Posterior vena cava (tissue), 2 donors: ENCODE measurements at regions of chr7 and their contacts with region 1.

Region 1: GRCh38 chr7:76185187-76185896 is 16.4 kb upstream of the SRRM3 start:
- DNase-seq: no peak

Region 2: DNA sequence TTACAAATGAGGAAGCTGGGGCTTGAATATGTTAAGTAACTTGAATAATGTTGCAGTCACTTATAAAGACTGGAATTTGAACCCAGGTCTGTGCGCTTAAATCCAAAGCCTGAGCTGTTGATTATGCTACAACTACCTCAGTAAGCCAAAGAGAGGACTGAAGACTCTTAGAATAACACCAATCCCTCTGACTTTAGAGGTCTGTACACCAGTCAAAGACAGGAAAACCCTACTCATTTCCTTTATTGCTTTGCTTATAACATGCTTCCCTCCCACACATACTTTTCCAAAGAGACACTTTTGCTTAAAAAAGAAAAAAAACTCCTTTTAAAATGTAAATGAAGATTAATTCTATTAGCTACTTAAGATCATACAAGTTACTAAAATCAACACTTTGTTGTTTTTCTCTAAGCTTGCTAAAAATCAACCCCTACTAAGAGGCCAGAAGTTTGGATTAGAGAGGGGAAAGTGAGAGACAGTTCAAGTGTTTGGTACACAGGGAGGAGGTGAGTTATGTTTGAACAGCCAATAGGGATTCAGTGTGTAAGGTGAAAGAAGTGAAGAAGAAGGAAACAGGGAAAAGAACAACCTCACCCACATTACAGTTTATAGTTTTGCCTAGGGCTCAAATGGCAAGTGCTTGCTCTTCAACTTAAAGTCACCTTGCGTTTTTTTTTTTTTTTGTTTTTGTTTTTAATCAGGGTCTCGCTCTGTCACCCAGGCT is 62.7 kb before region 1 on chr7:
- intact Hi-C with region 1: no loop called
- DNase-seq: no peak

Region 3: DNA sequence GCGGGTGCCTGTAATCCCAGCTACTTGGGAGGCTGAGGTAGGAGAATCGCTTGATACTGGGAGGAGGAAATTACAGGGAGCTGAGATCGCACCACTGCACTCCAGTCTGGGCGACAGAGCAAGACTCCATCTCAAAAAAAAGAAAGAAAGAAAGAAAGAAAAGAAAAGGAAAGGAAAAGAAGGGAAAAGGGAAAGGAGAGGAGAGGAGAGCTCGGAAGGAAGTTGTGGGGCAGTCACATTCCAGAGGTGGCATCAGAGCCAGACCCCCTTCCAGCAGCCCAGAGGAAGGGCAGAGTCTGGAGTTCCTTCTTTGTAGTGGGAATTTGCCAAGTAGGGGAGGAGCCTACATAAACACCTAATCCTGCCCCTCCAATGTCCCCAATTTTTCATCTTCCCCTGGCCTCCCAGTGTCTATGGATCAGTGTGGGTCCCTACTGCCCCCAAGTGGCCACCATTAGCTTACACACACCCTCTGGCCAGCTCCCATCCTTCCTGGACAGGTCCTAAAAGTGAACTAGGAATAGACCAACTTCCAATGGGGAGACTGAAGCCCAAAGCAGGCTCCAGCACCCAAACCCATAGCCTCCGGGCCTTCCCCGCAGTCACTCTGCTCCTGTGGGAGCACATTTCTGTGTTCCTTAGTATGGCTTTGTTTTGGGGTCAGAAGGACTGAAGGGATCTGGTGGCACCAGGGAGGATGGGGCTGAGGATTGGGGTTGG is 77.5 kb after region 1 on chr7:
- intact Hi-C with region 1: loop called in 1 of 2 experiments (anchors 10 kb)
- DNase-seq: no peak

Region 4: GRCh38 chr7:76340617-76341131 is 155.3 kb after region 1 on chr7:
- intact Hi-C with region 1: loop called in 1 of 2 experiments (anchors 1 kb)
- DNase-seq: peak; percentile 72